Activated CD4-positive, alpha-beta memory T cell treated with anti-CD3 and anti-CD28 coated beads for 36 hours (primary cell): ENCODE measurements at regions of chr4 and their contacts with region 1.

Region 1: DNA sequence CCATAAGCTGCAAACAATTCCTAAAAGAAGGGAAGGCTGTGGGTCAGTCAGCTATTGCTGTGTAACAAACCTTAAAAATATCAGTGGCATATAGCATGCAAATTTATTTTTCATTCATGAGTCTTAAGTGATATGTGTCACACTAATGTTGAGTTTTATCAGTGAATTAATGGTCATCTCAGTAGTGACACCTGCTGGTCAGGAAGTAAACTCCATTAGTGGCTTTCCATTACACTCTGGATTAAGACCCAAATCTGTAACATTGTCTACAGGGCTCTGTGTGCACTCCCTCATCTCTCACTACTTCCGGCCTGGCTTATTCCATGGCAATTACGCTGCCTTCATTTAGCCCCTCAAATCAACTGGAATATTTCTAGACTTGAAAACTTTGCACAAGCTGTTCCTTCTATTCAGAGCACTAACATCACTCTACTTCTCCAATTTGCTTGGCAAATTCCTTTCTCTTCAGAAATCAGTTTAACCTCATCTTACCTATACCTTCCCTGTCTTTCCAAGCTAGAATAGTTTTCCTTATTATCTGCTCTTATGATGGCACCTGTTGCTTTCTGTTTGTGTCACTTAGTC is 217.3 kb upstream of the TAPT1 start:
- DNase-seq: no peak
- H3K4me3 Mint-ChIP-seq: no peak overlapping the region
- H3K27ac Mint-ChIP-seq: no peak overlapping the region
- H3K4me1 Mint-ChIP-seq: no peaks in the 10 kb centered on the region
- H3K27me3 Mint-ChIP-seq: peaks cover 1% of the 10 kb centered on the region

Region 2: DNA sequence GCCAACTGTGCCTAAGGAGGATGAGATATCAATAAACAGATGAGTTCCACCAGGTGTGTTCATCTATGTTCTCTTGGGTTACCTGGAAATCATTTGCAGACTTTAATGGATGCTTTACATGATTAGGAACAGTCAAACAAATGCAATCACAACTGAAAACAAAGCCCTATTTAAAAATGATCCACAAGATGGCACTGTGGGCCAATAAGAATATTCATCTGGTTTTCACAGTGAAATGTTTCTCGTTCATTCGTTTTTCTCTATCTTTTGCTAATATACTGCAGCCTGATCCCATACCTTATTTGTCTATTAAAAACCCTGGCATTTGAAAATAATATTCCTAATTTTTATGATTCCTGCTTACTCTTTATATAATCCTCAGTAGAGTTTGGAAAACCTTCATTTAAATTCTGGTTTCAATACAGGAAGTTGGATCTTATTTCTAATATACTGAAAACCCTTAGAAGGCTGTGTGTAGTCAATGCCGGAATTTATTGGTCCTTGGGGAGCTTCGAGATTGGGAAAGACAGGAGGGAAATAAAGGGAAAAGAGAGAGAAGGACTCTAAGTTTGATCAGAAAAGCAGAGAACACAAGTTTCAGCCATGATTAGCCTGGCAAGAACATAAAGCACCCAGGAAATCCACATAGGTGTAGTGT is 153.6 kb before region 1 on chr4:
- CTCF ChIA-PET with region 1: interaction called, 11 read pairs
- POLR2A ChIA-PET with region 1: no interaction called
- intact Hi-C with region 1: no loop called
- DNase-seq: no peak
- H3K4me3 Mint-ChIP-seq: no peak overlapping the region
- H3K27ac Mint-ChIP-seq: no peak overlapping the region
- H3K4me1 Mint-ChIP-seq: peaks cover 4% of the 10 kb centered on the region
- H3K27me3 Mint-ChIP-seq: peaks cover 9% of the 10 kb centered on the region

Region 3: GRCh38 chr4:16457944-16458343 is 14.3 kb after region 1 on chr4:
- CTCF ChIA-PET with region 1: no interaction called
- POLR2A ChIA-PET with region 1: no interaction called
- intact Hi-C with region 1: no loop called
- DNase-seq: no peak
- H3K4me3 Mint-ChIP-seq: no peak overlapping the region
- H3K27ac Mint-ChIP-seq: no peak overlapping the region
- H3K4me1 Mint-ChIP-seq: no peaks in the 10 kb centered on the region
- H3K27me3 Mint-ChIP-seq: peaks cover 2% of the 10 kb centered on the region